ENCODE measurements at regions of chr1 and their contacts with region 1.

Region 1: DNA sequence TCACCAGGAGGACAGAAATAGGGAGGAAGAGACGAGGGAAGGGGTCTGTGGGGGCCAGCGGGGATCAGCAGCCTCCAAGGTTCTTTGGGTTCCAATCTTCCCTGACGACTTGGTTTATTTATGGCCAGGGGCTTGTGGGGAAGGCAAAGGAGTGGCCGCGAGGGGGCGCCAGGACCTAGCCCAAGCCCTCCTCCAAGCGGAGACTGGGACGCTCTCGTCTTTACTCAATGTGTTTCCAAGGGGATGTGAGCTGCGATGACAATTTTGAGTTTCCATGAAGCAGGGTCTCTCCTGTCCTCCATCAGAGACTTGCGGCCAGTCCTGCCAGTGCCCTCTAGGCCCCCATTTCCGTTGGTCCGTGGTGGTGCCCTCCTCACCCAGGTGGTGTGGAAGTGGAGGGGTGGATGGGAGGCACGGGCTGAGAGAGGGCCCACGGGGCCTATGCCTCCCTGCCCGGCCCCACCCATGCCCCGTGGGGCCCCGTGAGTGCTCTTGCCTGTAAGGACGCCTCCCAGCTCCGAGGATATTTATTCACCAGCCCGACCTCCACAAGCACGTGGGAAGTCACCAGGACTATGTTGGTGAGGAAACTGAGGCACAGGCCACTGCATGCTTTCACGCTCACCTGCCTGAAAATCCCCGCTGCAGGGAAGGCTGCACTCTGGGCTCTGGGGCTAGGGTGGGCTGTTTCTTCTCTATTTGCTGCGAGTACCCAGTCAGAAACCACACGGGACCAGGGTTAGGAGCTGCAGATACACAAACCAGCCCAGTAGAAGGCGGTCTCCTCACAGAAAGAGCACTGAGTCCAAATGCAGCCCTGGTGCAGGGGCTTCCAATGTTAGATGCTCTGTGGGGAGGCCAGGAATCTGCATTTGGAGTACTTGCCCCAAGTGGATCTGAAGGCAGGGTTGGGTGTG is 26.5 kb downstream of the DMRTB1 start:
- DNase-seq: peak; percentile 66 to 90 (median 82)
- ATAC-seq: peak; percentile 98
- H3K4me3 ChIP-seq: no peak overlapping the region
- H3K27ac ChIP-seq: no peak overlapping the region
- H3K4me1 ChIP-seq: no peaks in the 10 kb centered on the region
- H3K27me3 ChIP-seq: peaks cover 0 to 73% of the 10 kb centered on the region in 2 donors
- CTCF ChIP-seq: peak; percentile 72 to 78

Region 2: GRCh38 chr1:53592521-53592982 is 106.8 kb after region 1 on chr1:
- intact Hi-C with region 1: loop called in 1 of 2 experiments (anchors 10 kb)
- DNase-seq: peak in 2 of 4 donors; percentile 79 to 80
- ATAC-seq: peak; percentile 97
- H3K4me3 ChIP-seq: no peak overlapping the region
- H3K27ac ChIP-seq: no peak overlapping the region
- H3K4me1 ChIP-seq: peaks cover 5 to 6% of the 10 kb centered on the region in 2 donors
- H3K27me3 ChIP-seq: peaks cover 0 to 15% of the 10 kb centered on the region in 2 donors
- CTCF ChIP-seq: peak; percentile 11 to 15

Region 3: DNA sequence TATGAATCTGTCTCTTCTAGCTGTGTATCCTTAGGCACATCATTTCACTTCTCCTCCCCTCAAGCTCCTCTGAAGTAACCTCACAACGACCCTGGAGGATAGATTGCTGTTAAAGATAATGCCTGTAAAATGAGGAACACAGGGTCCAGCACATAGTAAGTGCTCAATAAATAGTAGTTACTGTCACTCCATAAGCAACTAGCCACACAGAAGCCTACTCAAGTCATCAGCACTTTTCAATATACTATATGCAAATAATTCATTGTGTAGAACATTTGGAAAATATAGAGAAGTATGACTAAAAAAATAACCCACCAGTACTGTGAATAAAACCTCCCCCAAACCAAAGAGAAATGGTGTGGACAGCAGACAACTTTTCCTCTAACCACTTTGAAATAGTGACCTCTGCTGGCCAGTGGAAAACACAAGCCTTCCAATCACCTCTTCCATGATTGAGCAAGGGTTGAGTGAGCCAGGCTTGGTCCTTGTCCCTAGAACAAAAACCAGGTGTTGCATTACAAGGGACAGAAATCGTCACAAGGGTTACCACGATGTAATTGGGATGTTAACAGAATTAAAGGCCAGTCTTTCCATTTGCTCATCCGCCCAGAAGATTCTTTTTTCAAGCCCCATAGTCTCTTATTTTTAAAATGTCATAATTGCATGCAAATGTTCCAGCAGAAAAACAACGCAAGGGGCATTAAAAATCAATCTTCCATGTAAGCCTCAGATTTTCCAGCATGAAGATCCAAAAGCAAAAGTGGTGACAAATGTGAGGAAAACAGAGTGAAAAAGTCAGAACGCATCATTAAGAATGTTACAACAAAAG is 269.0 kb after region 1 on chr1:
- intact Hi-C with region 1: loop called in 1 of 2 experiments (anchors 5 kb)
- DNase-seq: peak in 1 of 4 donors; percentile 44
- ATAC-seq: peak; percentile 84
- H3K4me3 ChIP-seq: no peak overlapping the region
- H3K27ac ChIP-seq: no peak overlapping the region
- H3K4me1 ChIP-seq: no peaks in the 10 kb centered on the region
- H3K27me3 ChIP-seq: no peaks in the 10 kb centered on the region
- CTCF ChIP-seq: peak; percentile 52 to 57

Region 4: DNA sequence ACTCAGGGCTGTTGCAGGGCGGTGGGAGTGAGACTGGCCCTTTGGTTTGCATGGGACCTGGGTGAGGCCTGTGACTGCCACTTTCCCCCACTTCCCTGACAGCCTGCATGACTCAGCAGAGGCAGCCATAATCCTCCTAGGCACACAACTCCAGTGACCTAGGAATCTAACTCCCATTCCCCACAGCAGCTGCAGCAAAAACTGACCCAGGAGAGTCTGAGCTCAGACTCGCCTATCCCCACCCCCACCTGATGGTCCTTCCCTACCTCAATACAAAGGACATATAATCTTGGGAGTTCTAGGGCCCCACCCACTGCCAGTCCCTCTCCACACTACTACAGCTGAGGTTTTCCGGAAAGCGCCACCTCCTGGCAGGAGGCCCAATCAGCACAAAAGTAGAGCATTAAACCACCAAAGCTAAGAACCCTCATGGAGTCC is 325.7 kb after region 1 on chr1:
- intact Hi-C with region 1: no loop called
- DNase-seq: no peak
- ATAC-seq: no peak
- H3K4me3 ChIP-seq: no peak overlapping the region
- H3K27ac ChIP-seq: no peak overlapping the region
- H3K4me1 ChIP-seq: no peaks in the 10 kb centered on the region
- H3K27me3 ChIP-seq: no peaks in the 10 kb centered on the region
- CTCF ChIP-seq: no peak

Measured in left lung (tissue), 14 donors.